Activated CD8-positive, alpha-beta T cell treated with anti-CD3 and anti-CD28 coated beads for 36 hours (primary cell): ENCODE measurements at regions of chr21 and their contacts with region 1.

Region 1: GRCh38 chr21:41361786-41362604 is at the start of gene MX2:
- DNase-seq: peak; percentile 82
- ATAC-seq: peak; percentile 79
- H3K4me3 Mint-ChIP-seq: peak within 1 kb of the TSS; percentile 72
- H3K27ac Mint-ChIP-seq: peak within 1 kb of the TSS; percentile 96
- H3K4me1 Mint-ChIP-seq: peaks cover 42% of the 10 kb centered on the region
- H3K27me3 Mint-ChIP-seq: no peaks in the 10 kb centered on the region
- CTCF ChIP-seq: no peak
- total RNA-seq, gene MX2: 9.2 to 10.3 TPM

Region 2: GRCh38 chr21:41338455-41338854 is 23.5 kb before region 1 on chr21:
- CTCF ChIA-PET with region 1: no interaction called
- POLR2A ChIA-PET with region 1: no interaction called
- intact Hi-C with region 1: no loop called
- DNase-seq: no peak
- ATAC-seq: no peak
- H3K4me3 Mint-ChIP-seq: no peak overlapping the region
- H3K27ac Mint-ChIP-seq: no peak overlapping the region
- H3K4me1 Mint-ChIP-seq: no peaks in the 10 kb centered on the region
- H3K27me3 Mint-ChIP-seq: peaks cover 2% of the 10 kb centered on the region
- CTCF ChIP-seq: no peak

Region 3: GRCh38 chr21:41377715-41378332 is 15.8 kb after region 1 on chr21:
- CTCF ChIA-PET with region 1: no interaction called
- POLR2A ChIA-PET with region 1: no interaction called
- intact Hi-C with region 1: no loop called
- DNase-seq: no peak
- ATAC-seq: no peak
- H3K4me3 Mint-ChIP-seq: no peak overlapping the region
- H3K27ac Mint-ChIP-seq: no peak overlapping the region
- H3K4me1 Mint-ChIP-seq: peaks cover 13% of the 10 kb centered on the region
- H3K27me3 Mint-ChIP-seq: no peaks in the 10 kb centered on the region
- CTCF ChIP-seq: no peak

Region 4: GRCh38 chr21:41406340-41406739 is 44.3 kb after region 1 on chr21:
- CTCF ChIA-PET with region 1: no interaction called
- POLR2A ChIA-PET with region 1: no interaction called
- intact Hi-C with region 1: no loop called
- DNase-seq: no peak
- ATAC-seq: no peak
- H3K4me3 Mint-ChIP-seq: no peak overlapping the region
- H3K27ac Mint-ChIP-seq: no peak overlapping the region
- H3K4me1 Mint-ChIP-seq: no peaks in the 10 kb centered on the region
- H3K27me3 Mint-ChIP-seq: no peaks in the 10 kb centered on the region
- CTCF ChIP-seq: no peak

Region 5: DNA sequence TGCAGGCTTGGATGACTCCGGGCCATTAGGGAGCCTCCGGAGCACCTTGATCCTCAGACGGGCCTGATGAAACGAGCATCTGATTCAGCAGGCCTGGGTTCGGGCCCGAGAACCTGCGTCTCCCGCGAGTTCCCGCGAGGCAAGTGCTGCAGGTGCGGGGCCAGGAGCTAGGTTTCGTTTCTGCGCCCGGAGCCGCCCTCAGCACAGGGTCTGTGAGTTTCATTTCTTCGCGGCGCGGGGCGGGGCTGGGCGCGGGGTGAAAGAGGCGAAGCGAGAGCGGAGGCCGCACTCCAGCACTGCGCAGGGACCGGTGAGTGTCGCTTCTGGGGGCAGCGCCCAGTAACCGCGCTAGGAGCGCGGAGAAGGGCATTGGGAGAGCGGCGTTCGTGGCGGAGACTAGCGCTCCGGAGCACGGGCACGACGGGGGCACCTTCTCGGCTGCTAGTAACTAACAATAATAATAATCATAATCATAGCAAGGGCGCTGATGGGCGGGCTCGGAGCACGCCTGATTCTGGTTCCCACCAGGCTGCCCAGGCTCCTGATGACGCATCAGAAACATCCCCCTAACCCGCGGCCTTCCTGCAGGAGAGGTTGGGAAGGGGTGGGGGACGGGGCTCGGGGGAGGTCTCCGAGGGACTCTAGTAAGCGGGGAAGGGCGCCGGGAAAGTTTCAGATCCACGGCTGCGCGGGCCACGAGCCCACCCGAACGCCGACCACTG is 64.1 kb after region 1 on chr21 and contains the start of gene MX1:
- CTCF ChIA-PET with region 1: no interaction called
- POLR2A ChIA-PET with region 1: interaction called, 10 read pairs
- intact Hi-C with region 1: no loop called
- DNase-seq: peak; percentile 89
- ATAC-seq: peak; percentile 97
- H3K4me3 Mint-ChIP-seq: peak within 1 kb of the TSS; percentile 87
- H3K27ac Mint-ChIP-seq: peak within 1 kb of the TSS; percentile 91
- H3K4me1 Mint-ChIP-seq: peaks cover 19% of the 10 kb centered on the region
- H3K27me3 Mint-ChIP-seq: no peaks in the 10 kb centered on the region
- CTCF ChIP-seq: no peak
- total RNA-seq, gene MX1: 39.4 to 40.0 TPM